ENCODE measurements at regions of chr3 and their contacts with region 1.

Region 1: DNA sequence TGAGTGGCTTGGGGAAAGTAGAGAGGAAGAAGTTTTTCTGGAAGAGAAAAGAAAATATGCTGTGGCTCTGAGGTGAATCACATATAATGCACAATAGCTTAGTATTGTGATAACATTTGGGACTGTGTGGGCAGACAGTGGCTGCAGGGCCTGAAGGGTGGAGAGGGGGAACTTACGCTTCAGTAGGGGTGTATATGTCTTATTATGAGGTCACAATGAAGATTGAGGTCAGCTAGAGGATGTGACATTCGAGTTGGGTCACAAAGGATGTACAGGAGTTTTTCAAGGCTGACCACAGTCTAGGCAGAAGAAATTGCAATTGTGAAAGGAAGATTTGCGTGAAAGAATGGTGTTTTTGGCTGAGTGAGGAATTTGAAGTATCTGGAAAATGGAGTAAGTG is 414.8 kb downstream of the LPP start:
- DNase-seq: no peak
- ATAC-seq: no peak
- H3K4me3 ChIP-seq: no peak overlapping the region
- H3K27ac ChIP-seq: no peak overlapping the region
- H3K4me1 ChIP-seq: no peaks in the 10 kb centered on the region
- H3K27me3 ChIP-seq: no peaks in the 10 kb centered on the region
- CTCF ChIP-seq: no peak

Region 2: DNA sequence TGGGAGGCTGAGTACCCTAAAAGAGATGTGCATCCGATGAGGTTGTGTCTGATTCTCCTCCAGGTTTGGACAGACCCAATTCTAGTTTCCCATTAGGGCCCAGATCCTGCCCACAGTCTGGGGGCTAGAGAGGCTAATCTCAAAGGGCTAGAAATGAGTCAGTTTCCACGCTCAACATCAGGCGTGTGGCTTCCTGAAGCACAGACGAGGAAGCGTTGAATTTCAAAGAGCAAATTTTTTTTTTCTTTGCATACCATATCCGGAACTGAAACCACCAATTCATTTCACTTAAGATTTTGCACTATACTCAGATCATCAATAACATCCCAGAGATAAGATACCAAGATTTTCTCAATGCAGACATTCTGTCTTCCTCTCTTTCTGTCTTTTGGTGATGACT is 649.7 kb before region 1 on chr3:
- CTCF ChIA-PET with region 1: no interaction called
- POLR2A ChIA-PET with region 1: interaction called, 11 read pairs
- in situ Hi-C with region 1: no loop called
- intact Hi-C with region 1: no loop called
- DNase-seq: no peak
- ATAC-seq: no peak
- H3K4me3 ChIP-seq: no peak overlapping the region
- H3K27ac ChIP-seq: peak overlapping the region; percentile 40; the same call in 1 of the 2 replicates
- H3K4me1 ChIP-seq: peaks cover 17% of the 10 kb centered on the region
- H3K27me3 ChIP-seq: no peaks in the 10 kb centered on the region
- CTCF ChIP-seq: no peak

Region 3: DNA sequence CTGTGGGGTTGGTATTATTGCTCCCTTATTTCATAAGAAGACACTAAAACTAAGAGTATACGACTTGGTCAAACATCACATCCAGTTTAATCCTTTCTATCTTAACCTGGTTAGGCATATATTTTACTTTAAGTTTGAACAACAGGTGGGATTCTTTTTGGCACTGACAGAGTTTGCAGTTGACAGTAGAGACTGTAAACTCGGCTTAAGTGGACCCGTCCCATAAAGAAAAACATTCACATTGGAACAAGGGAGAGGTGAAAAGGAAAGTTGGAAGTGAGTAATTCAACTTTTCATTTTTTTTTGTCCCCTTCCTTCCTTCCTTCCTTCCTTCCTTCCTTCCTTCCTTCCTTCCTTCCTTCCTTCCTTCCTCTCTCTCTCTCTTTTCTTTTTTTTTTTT is 59.4 kb before region 1 on chr3:
- CTCF ChIA-PET with region 1: no interaction called
- POLR2A ChIA-PET with region 1: interaction called, 11 read pairs
- in situ Hi-C with region 1: no loop called
- intact Hi-C with region 1: no loop called
- DNase-seq: no peak
- ATAC-seq: no peak
- H3K4me3 ChIP-seq: no peak overlapping the region
- H3K27ac ChIP-seq: no peak overlapping the region
- H3K4me1 ChIP-seq: no peaks in the 10 kb centered on the region
- H3K27me3 ChIP-seq: no peaks in the 10 kb centered on the region
- CTCF ChIP-seq: no peak